H1 (cell line): ENCODE measurements at regions of chr1 and their contacts with region 1.

Region 1: GRCh38 chr1:205255941-205256780 is 28.4 kb downstream of the TMCC2 start:
- DNase-seq: peak; percentile 61 to 95
- H3K4me3 ChIP-seq: no peak overlapping the region
- H3K27ac ChIP-seq: no peak overlapping the region
- H3K4me1 ChIP-seq: peaks cover 3 to 7% (median 4%) of the 10 kb centered on the region in 4 experiments; a peak in 4 of 7 replicates
- H3K27me3 ChIP-seq: no peaks in the 10 kb centered on the region
- CTCF ChIP-seq: peak; percentile 93 to 98 (median 98)
- EP300 ChIP-seq: no peak
- POLR2A ChIP-seq: no peak
- RAD21 ChIP-seq: peak; percentile 100

Region 2: DNA sequence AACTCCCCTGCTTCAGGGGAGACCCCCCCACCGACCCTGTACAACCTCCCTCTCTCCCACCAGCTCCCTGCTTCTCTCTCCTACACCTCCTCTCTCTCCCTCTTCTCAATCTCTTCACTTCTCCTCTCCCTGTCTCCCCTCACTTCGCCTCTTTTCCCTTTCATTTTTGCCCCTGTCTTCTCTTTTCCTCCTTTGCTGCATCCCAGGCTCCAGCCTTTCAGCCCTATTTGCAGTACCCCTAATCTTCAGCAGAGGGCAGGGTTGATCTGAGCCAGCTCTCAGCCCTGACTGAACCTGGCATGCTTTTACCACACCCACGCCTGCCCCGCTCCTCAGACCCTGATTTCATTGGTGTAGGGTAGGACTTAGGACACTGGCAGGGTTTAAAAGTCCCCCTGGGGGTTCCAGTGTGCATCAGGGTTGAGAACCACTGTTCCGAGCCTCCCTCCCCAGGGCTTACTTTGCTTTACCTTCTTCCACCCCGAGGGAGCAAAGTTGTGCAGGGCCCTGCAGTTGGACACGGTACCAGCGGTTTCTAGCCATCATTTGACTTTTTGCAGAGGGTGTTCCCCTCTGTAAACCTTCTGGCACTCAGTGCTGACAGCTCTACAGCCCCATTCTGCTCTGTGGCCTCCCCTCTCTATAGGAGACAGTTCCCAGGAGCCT is 280.5 kb before region 1 on chr1:
- CTCF ChIA-PET with region 1: interaction called, 13 read pairs
- POLR2A ChIA-PET with region 1: no interaction called
- DNase-seq: peak; percentile 23 to 88
- H3K4me3 ChIP-seq: no peak overlapping the region
- H3K27ac ChIP-seq: no peak overlapping the region
- H3K4me1 ChIP-seq: no peaks in the 10 kb centered on the region
- H3K27me3 ChIP-seq: no peaks in the 10 kb centered on the region
- CTCF ChIP-seq: peak; percentile 77 to 82 (median 80)
- EP300 ChIP-seq: no peak
- POLR2A ChIP-seq: no peak
- RAD21 ChIP-seq: peak; percentile 84 to 86

Region 3: DNA sequence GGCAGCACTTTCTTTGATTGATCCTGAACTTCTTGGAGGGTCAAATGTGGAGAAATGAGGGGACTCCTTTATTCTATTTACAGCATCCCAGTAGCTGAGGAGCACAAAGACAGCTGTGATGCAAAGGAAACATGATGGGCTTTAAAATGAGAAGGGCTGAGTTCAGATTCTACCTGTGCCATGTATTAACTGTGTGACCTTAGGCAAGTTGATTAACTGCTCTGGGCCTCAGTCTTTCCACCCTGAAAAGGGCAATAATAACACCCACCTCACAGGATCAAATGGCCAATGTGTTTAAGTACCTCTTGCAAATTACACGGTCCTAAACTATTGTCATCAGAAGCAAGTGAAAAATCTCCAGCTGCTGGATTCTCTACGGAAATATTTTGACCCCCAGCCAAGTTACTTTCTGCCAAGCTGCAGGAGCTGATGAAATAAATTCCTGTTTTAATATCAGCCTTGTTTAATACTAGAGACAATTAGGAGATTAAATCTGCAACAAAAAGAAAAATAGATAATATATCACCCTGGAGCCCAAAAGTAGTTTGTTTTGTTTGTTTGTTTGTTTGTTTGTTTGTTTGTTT is 187.6 kb before region 1 on chr1:
- CTCF ChIA-PET with region 1: interaction called, 35 read pairs
- POLR2A ChIA-PET with region 1: no interaction called
- DNase-seq: no peak
- H3K4me3 ChIP-seq: no peak overlapping the region
- H3K27ac ChIP-seq: no peak overlapping the region
- H3K4me1 ChIP-seq: no peaks in the 10 kb centered on the region
- H3K27me3 ChIP-seq: no peaks in the 10 kb centered on the region
- CTCF ChIP-seq: no peak
- EP300 ChIP-seq: no peak
- POLR2A ChIP-seq: no peak
- RAD21 ChIP-seq: no peak

Region 4: DNA sequence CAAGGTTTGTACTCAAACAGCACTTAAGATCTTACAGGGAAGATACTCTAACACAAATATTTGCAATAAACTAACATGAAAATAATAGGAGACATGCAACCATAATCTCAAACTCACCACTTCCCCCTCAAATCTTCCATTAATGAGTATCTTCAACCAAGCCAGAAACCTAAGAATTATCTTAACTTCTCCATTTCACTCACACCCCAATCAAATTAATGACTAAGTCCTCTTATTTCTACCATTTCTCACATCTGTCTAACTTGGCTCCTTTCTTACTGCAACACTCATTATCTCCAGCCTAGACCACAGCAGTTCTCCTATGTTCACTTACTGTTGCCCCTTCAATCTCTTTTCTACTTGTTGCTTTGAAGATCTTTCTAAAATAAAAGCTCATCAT is 144.8 kb before region 1 on chr1:
- CTCF ChIA-PET with region 1: interaction called, 23 read pairs
- POLR2A ChIA-PET with region 1: no interaction called
- DNase-seq: no peak
- H3K4me3 ChIP-seq: no peak overlapping the region
- H3K27ac ChIP-seq: no peak overlapping the region
- H3K4me1 ChIP-seq: no peaks in the 10 kb centered on the region; a peak in 1 of 7 replicates
- H3K27me3 ChIP-seq: no peaks in the 10 kb centered on the region
- CTCF ChIP-seq: no peak
- EP300 ChIP-seq: no peak
- POLR2A ChIP-seq: no peak
- RAD21 ChIP-seq: no peak

Region 5: GRCh38 chr1:205141236-205142101 is 114.7 kb before region 1 on chr1:
- CTCF ChIA-PET with region 1: interaction called, 29 read pairs
- POLR2A ChIA-PET with region 1: no interaction called
- DNase-seq: peak; percentile 57 to 87
- H3K4me3 ChIP-seq: no peak overlapping the region
- H3K27ac ChIP-seq: no peak overlapping the region
- H3K4me1 ChIP-seq: peaks cover 0 to 3% (median 1%) of the 10 kb centered on the region in 4 experiments; a peak in 2 of 7 replicates
- H3K27me3 ChIP-seq: no peaks in the 10 kb centered on the region
- CTCF ChIP-seq: peak; percentile 17 to 83 (median 79)
- EP300 ChIP-seq: no peak
- POLR2A ChIP-seq: no peak
- RAD21 ChIP-seq: peak; percentile 61 to 71

Region 6: DNA sequence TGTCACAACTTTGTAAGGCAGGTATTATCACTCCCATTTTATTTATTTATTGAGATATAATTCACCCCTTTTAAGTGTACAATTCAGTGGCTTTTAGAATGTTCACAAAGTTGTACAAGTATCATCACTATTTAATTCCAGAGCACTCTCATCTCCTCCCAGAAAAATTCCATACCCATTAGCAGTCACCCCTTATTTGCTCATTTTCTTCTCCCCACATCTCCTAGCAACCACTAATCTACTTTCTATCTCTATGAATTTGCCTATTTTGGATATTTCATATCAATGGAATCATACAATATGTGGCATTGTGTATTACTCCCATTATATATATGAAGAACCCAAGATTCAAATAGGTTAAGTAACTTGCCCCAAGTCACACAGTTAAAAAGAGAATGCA is 51.6 kb before region 1 on chr1:
- CTCF ChIA-PET with region 1: interaction called, 10 read pairs
- POLR2A ChIA-PET with region 1: interaction called, 3 read pairs
- DNase-seq: no peak
- H3K4me3 ChIP-seq: no peak overlapping the region
- H3K27ac ChIP-seq: no peak overlapping the region
- H3K4me1 ChIP-seq: peaks cover 0 to 10% (median 5%) of the 10 kb centered on the region in 4 experiments
- H3K27me3 ChIP-seq: no peaks in the 10 kb centered on the region
- CTCF ChIP-seq: no peak
- EP300 ChIP-seq: no peak
- POLR2A ChIP-seq: no peak
- RAD21 ChIP-seq: no peak

Region 7: DNA sequence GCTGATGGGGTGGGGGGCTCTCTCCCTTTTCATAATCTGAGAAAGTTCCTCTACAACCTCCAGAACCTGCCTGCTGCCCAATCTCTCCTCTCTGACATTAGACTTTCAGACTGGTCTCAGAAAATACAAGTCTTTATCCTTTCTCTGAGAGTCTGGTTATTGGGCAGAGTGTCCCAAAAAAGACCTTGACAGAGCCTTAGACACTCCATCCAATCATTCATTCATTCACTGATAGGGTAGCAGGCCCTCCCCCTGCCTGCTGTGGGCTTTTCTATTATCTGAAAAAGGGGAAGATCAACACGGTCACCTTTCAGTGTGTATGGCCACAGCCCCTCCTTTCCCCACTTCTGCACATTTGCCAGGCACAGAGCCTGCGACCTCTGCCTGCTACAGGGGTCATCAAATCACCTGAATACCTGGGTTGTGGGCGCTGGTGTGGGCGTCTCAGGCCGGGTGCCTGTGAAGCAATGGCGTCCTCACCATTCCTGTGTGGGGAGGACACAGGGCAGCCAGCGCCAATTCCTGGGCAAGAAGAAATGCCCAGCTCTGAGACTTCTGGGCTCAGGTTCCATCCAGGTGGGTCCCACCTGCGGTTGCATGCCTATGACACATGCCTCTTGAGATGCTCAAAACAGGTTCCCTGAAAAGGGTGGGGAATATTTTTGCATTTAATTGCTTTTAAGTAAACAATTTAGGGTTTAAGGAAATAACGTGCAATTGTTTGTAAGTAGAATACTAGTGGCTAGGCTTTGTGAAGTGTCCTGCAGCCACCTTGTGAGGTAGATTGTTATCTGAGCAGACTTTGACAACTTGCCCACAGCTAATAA is 322.8 kb after region 1 on chr1:
- CTCF ChIA-PET with region 1: no interaction called
- POLR2A ChIA-PET with region 1: no interaction called
- DNase-seq: no peak
- H3K4me3 ChIP-seq: no peak overlapping the region
- H3K27ac ChIP-seq: no peak overlapping the region
- H3K4me1 ChIP-seq: peaks cover 0 to 11% (median 0%) of the 10 kb centered on the region in 4 experiments; a peak in 4 of 7 replicates
- H3K27me3 ChIP-seq: peaks cover 0 to 8% (median 3%) of the 10 kb centered on the region in 4 experiments; a peak in 4 of 7 replicates
- CTCF ChIP-seq: no peak
- EP300 ChIP-seq: no peak
- POLR2A ChIP-seq: no peak
- RAD21 ChIP-seq: no peak